ENCODE measurements at regions of chr1 and their contacts with region 1.

Region 1: GRCh38 chr1:109649491-109649914 is 6.4 kb upstream of the GSTM4 start:
- DNase-seq: peak; percentile 56
- H3K4me3 ChIP-seq: peak overlapping the region; percentile 34 to 52; a peak in 3 of 4 replicates
- H3K27ac ChIP-seq: peak overlapping the region in 1 of 2 experiments; percentile 90; a peak in 2 of 4 replicates
- H3K4me1 ChIP-seq: peaks cover 7 to 30% of the 10 kb centered on the region in 2 experiments
- H3K27me3 ChIP-seq: no peaks in the 10 kb centered on the region
- CTCF ChIP-seq: peak; percentile 57
- EP300 ChIP-seq: no peak
- RAD21 ChIP-seq: peak; percentile 81

Region 2: GRCh38 chr1:109493805-109494539 is 155.5 kb before region 1 on chr1 and contains the start of gene CYB561D1:
- CTCF ChIA-PET with region 1: interaction called, 27 read pairs
- POLR2A ChIA-PET with region 1: no interaction called
- DNase-seq: peak; percentile 95
- H3K4me3 ChIP-seq: peak within 1 kb of the TSS; percentile 96 to 100
- H3K27ac ChIP-seq: peak within 1 kb of the TSS; percentile 64 to 81; a peak in 3 of 4 replicates
- H3K4me1 ChIP-seq: peaks cover 0 to 19% of the 10 kb centered on the region in 2 experiments; a peak in 2 of 4 replicates
- H3K27me3 ChIP-seq: no peaks in the 10 kb centered on the region
- CTCF ChIP-seq: peak; percentile 89
- EP300 ChIP-seq: peak; percentile 27 to 38; a peak in 1 of 4 replicates
- RAD21 ChIP-seq: peak; percentile 51
- polyA plus RNA-seq, gene CYB561D1: 5.4 and 8.9 TPM in 2 replicates

Region 3: GRCh38 chr1:109499661-109500536 is 149.6 kb before region 1 on chr1:
- CTCF ChIA-PET with region 1: interaction called, 27 read pairs
- POLR2A ChIA-PET with region 1: no interaction called
- DNase-seq: peak; percentile 42
- H3K4me3 ChIP-seq: no peak overlapping the region
- H3K27ac ChIP-seq: no peak overlapping the region; a peak in 1 of 4 replicates
- H3K4me1 ChIP-seq: peaks cover 0 to 17% of the 10 kb centered on the region in 2 experiments; a peak in 1 of 4 replicates
- H3K27me3 ChIP-seq: no peaks in the 10 kb centered on the region
- CTCF ChIP-seq: peak; percentile 55
- EP300 ChIP-seq: no peak
- RAD21 ChIP-seq: peak; percentile 24; the same call in 1 of the 2 replicates

Region 4: GRCh38 chr1:109548321-109549267 is 100.9 kb before region 1 on chr1 and contains the start of gene GNAI3:
- CTCF ChIA-PET with region 1: interaction called, 297 read pairs
- POLR2A ChIA-PET with region 1: interaction called, 21 read pairs
- DNase-seq: peak; percentile 90
- H3K4me3 ChIP-seq: peak within 1 kb of the TSS; percentile 80 to 88
- H3K27ac ChIP-seq: peak within 1 kb of the TSS; percentile 88 to 93
- H3K4me1 ChIP-seq: peaks cover 3 to 20% of the 10 kb centered on the region in 2 experiments; a peak in 3 of 4 replicates
- H3K27me3 ChIP-seq: no peaks in the 10 kb centered on the region
- CTCF ChIP-seq: no peak
- EP300 ChIP-seq: peak in 1 of 2 experiments; percentile 33; a peak in 1 of 4 replicates
- RAD21 ChIP-seq: no peak; the same call in 1 of the 2 replicates
- polyA plus RNA-seq, gene GNAI3: 4.0 and 4.8 TPM in 2 replicates

Region 5: DNA sequence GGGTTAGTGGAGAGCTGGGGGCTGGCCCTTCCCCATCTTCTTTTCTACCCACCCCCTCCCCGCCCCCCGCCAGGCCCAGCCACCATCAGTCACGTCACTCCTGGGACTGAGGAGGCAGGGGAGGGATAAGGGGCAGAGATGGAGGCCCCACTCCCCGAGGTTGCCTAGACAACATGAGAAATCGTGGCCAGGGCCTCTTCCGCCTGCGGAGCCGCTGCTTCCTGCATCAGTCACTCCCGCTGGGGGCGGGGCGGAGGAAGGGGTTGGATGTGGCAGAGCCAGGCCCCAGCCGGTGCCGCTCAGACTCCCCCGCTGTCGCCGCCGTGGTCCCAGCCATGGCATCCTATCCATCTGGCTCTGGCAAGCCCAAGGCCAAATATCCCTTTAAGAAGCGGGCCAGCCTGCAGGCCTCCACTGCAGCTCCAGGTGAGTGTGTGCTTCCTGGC is 28.6 kb before region 1 on chr1:
- CTCF ChIA-PET with region 1: interaction called, 114 read pairs
- POLR2A ChIA-PET with region 1: no interaction called
- DNase-seq: peak; percentile 95
- H3K4me3 ChIP-seq: peak overlapping the region; percentile 85 to 98
- H3K27ac ChIP-seq: peak overlapping the region; percentile 97 to 98
- H3K4me1 ChIP-seq: peaks cover 28 to 60% of the 10 kb centered on the region in 2 experiments; a peak in 3 of 4 replicates
- H3K27me3 ChIP-seq: no peaks in the 10 kb centered on the region
- CTCF ChIP-seq: no peak
- EP300 ChIP-seq: no peak
- RAD21 ChIP-seq: no peak

Region 6: DNA sequence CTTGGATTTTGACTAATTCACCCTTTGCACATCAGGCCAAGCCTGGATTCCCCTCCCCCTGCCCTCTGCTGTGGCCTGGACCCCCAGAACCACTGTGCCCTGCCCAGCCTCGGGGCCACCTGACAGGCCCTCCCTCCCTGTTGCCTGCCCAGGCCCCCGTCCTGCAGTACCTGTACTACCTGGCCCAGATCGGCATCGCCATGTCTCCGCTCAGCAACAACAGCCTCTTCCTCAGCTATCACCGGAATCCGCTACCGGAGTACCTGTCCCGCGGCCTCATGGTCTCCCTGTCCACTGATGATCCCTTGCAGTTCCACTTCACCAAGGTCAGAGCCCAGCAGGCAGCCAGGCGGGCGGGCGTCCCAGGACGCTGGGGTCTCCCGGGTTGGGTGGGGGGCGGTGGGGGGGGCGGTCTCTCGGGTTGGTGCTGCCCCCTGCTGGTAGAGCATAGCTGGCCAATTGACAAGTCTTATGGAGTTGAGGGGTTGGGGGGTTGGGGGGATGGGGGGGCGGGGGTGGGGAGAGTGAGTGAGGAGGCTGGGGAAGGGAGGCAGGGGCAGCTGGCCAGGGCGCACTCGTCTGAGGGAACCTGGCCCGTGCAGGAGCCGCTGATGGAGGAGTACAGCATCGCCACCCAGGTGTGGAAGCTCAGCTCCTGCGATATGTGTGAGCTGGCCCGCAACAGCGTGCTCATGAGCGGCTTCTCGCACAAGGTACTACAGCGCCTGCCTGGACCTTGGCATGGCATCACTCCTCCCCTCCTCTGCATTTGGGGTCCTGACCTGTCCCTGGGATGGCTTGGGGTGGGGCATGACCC is 19.2 kb before region 1 on chr1:
- CTCF ChIA-PET with region 1: interaction called, 114 read pairs
- POLR2A ChIA-PET with region 1: interaction called, 3 read pairs
- DNase-seq: peak; percentile 84
- H3K4me3 ChIP-seq: no peak overlapping the region
- H3K27ac ChIP-seq: peak overlapping the region in 1 of 2 experiments; percentile 97; a peak in 2 of 4 replicates
- H3K4me1 ChIP-seq: peaks cover 0 to 46% of the 10 kb centered on the region in 2 experiments; a peak in 2 of 4 replicates
- H3K27me3 ChIP-seq: no peaks in the 10 kb centered on the region
- CTCF ChIP-seq: 0 out of 2 replicates have a peak, but pooled peaks have one; percentile 4
- EP300 ChIP-seq: no peak
- RAD21 ChIP-seq: no peak

Region 7: DNA sequence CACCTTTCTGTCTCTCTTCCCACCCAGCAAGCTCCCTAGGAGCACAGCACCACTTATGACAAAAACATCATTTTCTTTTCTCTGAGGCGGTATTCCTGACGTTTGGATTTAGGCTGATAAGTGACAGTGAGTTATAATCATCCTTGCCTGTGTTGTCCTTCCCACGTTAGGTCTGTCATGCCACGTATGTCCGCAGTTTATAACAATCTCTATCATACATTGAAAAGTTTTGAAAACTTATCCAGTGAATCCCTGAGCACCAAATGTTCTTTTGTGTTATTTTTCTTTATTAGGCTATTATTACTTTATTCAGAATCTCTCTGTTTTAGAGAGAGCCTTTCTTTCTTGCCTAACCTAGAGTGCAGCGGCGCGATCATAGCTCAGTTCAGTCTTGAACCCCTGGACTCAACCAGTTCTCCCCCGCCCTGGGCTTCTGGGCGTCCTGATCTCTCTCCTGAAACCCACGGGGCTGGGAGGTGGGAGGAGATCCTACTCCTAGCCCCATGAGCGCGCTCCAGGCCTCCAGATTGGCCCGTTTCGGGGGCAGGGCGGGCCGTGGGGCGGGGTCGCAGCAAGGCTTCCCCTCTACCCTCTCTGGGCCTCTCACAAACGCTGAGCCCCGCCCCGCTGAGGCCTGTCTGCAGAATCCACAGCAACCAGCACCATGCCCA is 18.1 kb after region 1 on chr1 and contains the start of gene GSTM2:
- CTCF ChIA-PET with region 1: interaction called, 27 read pairs
- POLR2A ChIA-PET with region 1: no interaction called
- DNase-seq: peak; percentile 96
- H3K4me3 ChIP-seq: peak within 1 kb of the TSS; percentile 36 to 61
- H3K27ac ChIP-seq: no peak within 1 kb of the TSS
- H3K4me1 ChIP-seq: peaks cover 7% of the 10 kb centered on the region in 2 experiments; a peak in 2 of 4 replicates
- H3K27me3 ChIP-seq: no peaks in the 10 kb centered on the region
- CTCF ChIP-seq: no peak
- EP300 ChIP-seq: no peak
- RAD21 ChIP-seq: no peak
- polyA plus RNA-seq, gene GSTM2: 70.2 and 97.6 TPM in 2 replicates

Region 8: GRCh38 chr1:109687616-109688499 is 38.4 kb after region 1 on chr1 and contains the start of gene GSTM1:
- CTCF ChIA-PET with region 1: no interaction called
- POLR2A ChIA-PET with region 1: no interaction called
- DNase-seq: no peak
- H3K4me3 ChIP-seq: no peak within 1 kb of the TSS
- H3K27ac ChIP-seq: no peak within 1 kb of the TSS
- H3K4me1 ChIP-seq: no peaks in the 10 kb centered on the region
- H3K27me3 ChIP-seq: no peaks in the 10 kb centered on the region
- CTCF ChIP-seq: no peak
- EP300 ChIP-seq: no peak
- RAD21 ChIP-seq: no peak
- polyA plus RNA-seq, gene GSTM1: not detected in 2 replicates